Naive thymus-derived CD8-positive, alpha-beta T cell (primary cell): ENCODE measurements at regions of chr2 and their contacts with region 1.

Region 1: DNA sequence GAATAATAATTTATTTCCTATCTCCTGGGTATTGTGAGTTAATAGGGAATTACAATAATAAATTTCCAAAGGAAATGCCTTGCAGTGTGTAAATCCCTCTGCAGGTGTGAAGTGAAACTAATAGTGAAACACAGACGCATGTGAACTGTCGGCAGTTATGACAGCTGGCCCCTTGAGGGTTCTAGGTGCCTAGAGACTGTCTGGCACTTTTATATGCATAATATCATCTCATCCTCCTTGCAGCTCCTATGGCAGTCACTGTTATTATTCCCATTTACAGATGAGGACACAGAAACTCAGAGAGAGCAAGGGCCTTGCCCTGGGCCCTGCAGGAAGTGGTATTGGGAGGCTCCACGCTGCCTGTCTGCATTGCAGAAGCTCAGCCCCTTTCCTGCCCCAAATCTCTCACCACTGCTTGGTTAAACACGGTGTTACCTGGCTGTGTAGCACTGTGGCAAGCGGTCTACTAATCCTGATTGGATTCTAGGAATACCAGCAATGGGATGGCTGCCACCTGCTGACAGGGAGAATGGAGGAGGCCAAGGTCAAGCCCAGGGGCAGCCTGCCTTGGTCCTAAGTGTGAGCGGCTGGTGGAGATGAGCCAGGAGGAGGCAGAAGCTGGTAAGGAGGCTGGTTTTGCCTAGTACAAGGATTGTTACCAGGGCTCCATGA is 32.8 kb upstream of the ACKR3 start:
- DNase-seq: peak; percentile 19 to 75 (median 50)
- ATAC-seq: peak; percentile 96 to 98
- H3K4me3 Mint-ChIP-seq: peak overlapping the region; percentile 93 to 100 (median 98)
- H3K27ac Mint-ChIP-seq: peak overlapping the region; percentile 94 to 99 (median 97)
- H3K4me1 Mint-ChIP-seq: peaks cover 23 to 75% (median 60%) of the 10 kb centered on the region in 4 donors
- H3K27me3 Mint-ChIP-seq: no peaks in the 10 kb centered on the region

Region 2: GRCh38 chr2:236512902-236513435 is 23.9 kb before region 1 on chr2:
- POLR2A ChIA-PET with region 1: interaction called, 10 read pairs
- DNase-seq: peak; percentile 49 to 82 (median 66)
- ATAC-seq: peak; percentile 98 to 100
- H3K4me3 Mint-ChIP-seq: no peak overlapping the region
- H3K27ac Mint-ChIP-seq: no peak overlapping the region
- H3K4me1 Mint-ChIP-seq: peaks cover 0 to 3% (median 2%) of the 10 kb centered on the region in 4 donors
- H3K27me3 Mint-ChIP-seq: peaks cover 0 to 9% (median 0%) of the 10 kb centered on the region in 5 donors

Region 3: GRCh38 chr2:236569573-236569973 is 32.7 kb after region 1 on chr2 and contains the start of gene ACKR3:
- POLR2A ChIA-PET with region 1: interaction called, 36 read pairs
- DNase-seq: peak; percentile 54 to 91 (median 78)
- ATAC-seq: peak; percentile 95 to 96
- H3K4me3 Mint-ChIP-seq: peak within 1 kb of the TSS; percentile 70 to 90 (median 87)
- H3K27ac Mint-ChIP-seq: peak within 1 kb of the TSS; percentile 6 to 84 (median 62)
- H3K4me1 Mint-ChIP-seq: peaks cover 18 to 42% (median 32%) of the 10 kb centered on the region in 4 donors
- H3K27me3 Mint-ChIP-seq: no peaks in the 10 kb centered on the region
- polyA plus RNA-seq, gene ACKR3: 2.4 to 5.6 (median 4.2) TPM